ENCODE measurements at regions of chr5 and their contacts with region 1.

Region 1: DNA sequence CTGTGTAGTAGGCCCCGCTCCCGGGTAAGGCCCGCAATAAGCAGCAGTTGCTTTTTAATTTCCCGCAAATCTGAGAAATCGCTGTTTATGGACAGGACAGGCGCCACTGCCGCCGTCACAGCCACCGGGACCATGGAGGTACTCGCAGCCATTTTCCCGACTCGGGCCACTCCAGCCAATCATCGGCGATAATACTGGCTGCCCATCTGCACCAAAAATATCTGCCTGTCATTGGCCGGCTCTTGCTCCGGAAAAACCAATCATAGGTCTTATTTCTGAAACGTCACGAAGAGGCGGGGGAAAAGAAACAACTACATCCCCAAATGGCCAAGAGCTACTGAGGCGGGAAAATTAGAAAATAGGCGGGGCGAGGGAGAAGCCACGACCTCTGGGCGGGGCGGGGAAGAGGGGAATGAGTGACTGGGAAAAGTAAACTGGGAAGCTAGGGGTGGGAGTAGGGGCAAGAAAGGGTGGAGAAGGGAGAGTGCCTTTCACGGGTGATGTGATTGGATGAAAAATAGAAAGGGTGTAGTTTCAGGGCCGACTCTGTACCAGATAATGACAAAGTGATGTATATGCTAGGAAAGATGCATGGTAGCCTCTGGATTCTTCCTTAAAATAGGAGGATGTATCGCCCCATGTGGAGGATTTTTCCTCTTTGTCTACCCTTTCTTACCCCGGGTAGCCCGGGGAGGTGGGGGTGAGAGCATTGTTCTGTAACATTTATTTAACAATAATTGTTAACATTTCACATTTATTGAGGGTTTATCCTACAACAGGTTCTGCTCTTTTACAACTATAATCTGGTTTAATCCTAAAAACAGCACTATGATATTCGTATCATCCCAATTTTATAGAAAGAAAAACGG is at the start of gene CDC23:
- DNase-seq: peak; percentile 94
- ATAC-seq: peak; percentile 98
- H3K4me3 Mint-ChIP-seq: peak within 1 kb of the TSS; percentile 92
- H3K27ac Mint-ChIP-seq: peak within 1 kb of the TSS; percentile 94
- H3K4me1 Mint-ChIP-seq: peaks cover 16% of the 10 kb centered on the region
- H3K27me3 Mint-ChIP-seq: no peaks in the 10 kb centered on the region
- total RNA-seq, gene CDC23: 34.0 to 38.1 TPM

Region 2: DNA sequence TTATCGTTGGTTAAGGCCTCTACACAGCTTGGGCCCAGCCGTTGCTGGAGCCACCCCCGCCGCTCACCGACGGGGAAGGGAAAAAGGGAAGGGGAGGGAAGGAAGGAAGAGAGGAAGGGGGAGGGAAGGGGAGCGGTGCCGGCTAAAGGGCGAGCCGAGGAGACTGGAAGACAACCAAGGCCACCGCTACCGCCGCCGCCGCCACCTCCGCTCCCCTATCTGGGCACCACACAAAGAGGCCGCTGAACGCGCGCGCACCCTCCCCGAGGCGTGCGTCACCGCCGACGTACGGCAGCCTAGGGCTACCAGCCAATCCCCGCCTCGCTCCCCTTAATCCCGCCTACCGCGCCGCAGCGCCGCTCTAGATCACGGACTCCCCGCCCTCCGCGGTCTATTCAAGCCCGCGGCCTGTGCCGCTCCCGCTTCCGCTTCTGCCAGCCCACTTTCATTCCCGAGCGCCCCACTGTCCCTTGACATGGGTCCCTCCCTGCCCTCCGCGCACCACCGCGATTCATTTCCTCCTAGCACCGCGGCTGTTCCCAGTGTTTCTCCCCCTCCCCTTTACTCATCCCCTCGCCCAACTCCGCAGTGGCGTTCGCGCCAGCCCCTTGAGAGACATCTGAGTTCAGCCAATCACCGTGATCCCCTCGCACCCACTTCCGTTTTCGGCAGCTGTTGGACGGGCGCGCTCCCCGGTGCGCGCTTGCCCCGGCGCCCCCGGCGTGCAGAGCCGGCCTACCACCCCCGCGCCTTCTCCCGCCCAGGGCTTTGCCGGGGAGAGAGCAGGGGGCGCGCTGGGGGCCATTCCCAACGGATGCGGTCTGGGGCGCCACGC is 459.1 kb before region 1 on chr5 and contains the start of gene HNRNPA0:
- CTCF ChIA-PET with region 1: no interaction called
- POLR2A ChIA-PET with region 1: no interaction called
- intact Hi-C with region 1: loop called in 1 of 2 experiments (anchors 1 kb)
- DNase-seq: peak; percentile 98
- ATAC-seq: peak; percentile 87
- H3K4me3 Mint-ChIP-seq: peak within 1 kb of the TSS; percentile 77
- H3K27ac Mint-ChIP-seq: peak within 1 kb of the TSS; percentile 97
- H3K4me1 Mint-ChIP-seq: peaks cover 28% of the 10 kb centered on the region
- H3K27me3 Mint-ChIP-seq: no peaks in the 10 kb centered on the region
- total RNA-seq, gene HNRNPA0: 18.9 to 32.1 TPM

Region 3: GRCh38 chr5:138148811-138149210 is 64.6 kb before region 1 on chr5:
- CTCF ChIA-PET with region 1: no interaction called
- POLR2A ChIA-PET with region 1: no interaction called
- intact Hi-C with region 1: no loop called
- DNase-seq: no peak
- ATAC-seq: no peak
- H3K4me3 Mint-ChIP-seq: no peak overlapping the region
- H3K27ac Mint-ChIP-seq: no peak overlapping the region
- H3K4me1 Mint-ChIP-seq: no peaks in the 10 kb centered on the region
- H3K27me3 Mint-ChIP-seq: no peaks in the 10 kb centered on the region

Region 4: GRCh38 chr5:138160706-138161105 is 52.7 kb before region 1 on chr5:
- CTCF ChIA-PET with region 1: no interaction called
- POLR2A ChIA-PET with region 1: no interaction called
- intact Hi-C with region 1: no loop called
- DNase-seq: no peak
- ATAC-seq: no peak
- H3K4me3 Mint-ChIP-seq: no peak overlapping the region
- H3K27ac Mint-ChIP-seq: no peak overlapping the region
- H3K4me1 Mint-ChIP-seq: no peaks in the 10 kb centered on the region
- H3K27me3 Mint-ChIP-seq: no peaks in the 10 kb centered on the region

Region 5: GRCh38 chr5:138274189-138274853 is 60.9 kb after region 1 on chr5 and contains the start of gene GFRA3:
- CTCF ChIA-PET with region 1: no interaction called
- POLR2A ChIA-PET with region 1: interaction called, 10 read pairs
- intact Hi-C with region 1: no loop called
- DNase-seq: peak; percentile 32
- ATAC-seq: peak; percentile 45
- H3K4me3 Mint-ChIP-seq: peak within 1 kb of the TSS; percentile 52
- H3K27ac Mint-ChIP-seq: no peak within 1 kb of the TSS
- H3K4me1 Mint-ChIP-seq: peaks cover 5% of the 10 kb centered on the region
- H3K27me3 Mint-ChIP-seq: peaks cover 25% of the 10 kb centered on the region
- total RNA-seq, gene GFRA3: 0.09 TPM in 1 of 2 experiments, not detected in the other

Region 6: GRCh38 chr5:138337685-138338410 is 124.5 kb after region 1 on chr5 and contains the start of gene FAM53C:
- CTCF ChIA-PET with region 1: no interaction called
- POLR2A ChIA-PET with region 1: interaction called, 3 read pairs
- intact Hi-C with region 1: loop called (anchors 1 to 5 kb)
- DNase-seq: peak; percentile 95
- ATAC-seq: peak; percentile 88
- H3K4me3 Mint-ChIP-seq: peak within 1 kb of the TSS; percentile 84
- H3K27ac Mint-ChIP-seq: peak within 1 kb of the TSS; percentile 97
- H3K4me1 Mint-ChIP-seq: peaks cover 38% of the 10 kb centered on the region
- H3K27me3 Mint-ChIP-seq: no peaks in the 10 kb centered on the region
- total RNA-seq, gene FAM53C: 22.8 to 25.9 TPM

Region 7: GRCh38 chr5:138408023-138408422 is 194.6 kb after region 1 on chr5:
- CTCF ChIA-PET with region 1: interaction called, 3 read pairs
- POLR2A ChIA-PET with region 1: no interaction called
- intact Hi-C with region 1: loop called in 1 of 2 experiments (anchors 5 kb)
- DNase-seq: peak; percentile 68
- ATAC-seq: peak; percentile 94
- H3K4me3 Mint-ChIP-seq: no peak overlapping the region
- H3K27ac Mint-ChIP-seq: peak overlapping the region; percentile 60
- H3K4me1 Mint-ChIP-seq: peaks cover 13% of the 10 kb centered on the region
- H3K27me3 Mint-ChIP-seq: no peaks in the 10 kb centered on the region

Region 8: GRCh38 chr5:138491669-138492559 is 278.5 kb after region 1 on chr5:
- CTCF ChIA-PET with region 1: no interaction called
- POLR2A ChIA-PET with region 1: no interaction called
- intact Hi-C with region 1: loop called in 1 of 2 experiments (anchors 1 kb)
- DNase-seq: peak; percentile 92
- ATAC-seq: peak; percentile 99
- H3K4me3 Mint-ChIP-seq: peak overlapping the region; percentile 84
- H3K27ac Mint-ChIP-seq: peak overlapping the region; percentile 79
- H3K4me1 Mint-ChIP-seq: peaks cover 15% of the 10 kb centered on the region
- H3K27me3 Mint-ChIP-seq: peaks cover 23% of the 10 kb centered on the region

Region 9: DNA sequence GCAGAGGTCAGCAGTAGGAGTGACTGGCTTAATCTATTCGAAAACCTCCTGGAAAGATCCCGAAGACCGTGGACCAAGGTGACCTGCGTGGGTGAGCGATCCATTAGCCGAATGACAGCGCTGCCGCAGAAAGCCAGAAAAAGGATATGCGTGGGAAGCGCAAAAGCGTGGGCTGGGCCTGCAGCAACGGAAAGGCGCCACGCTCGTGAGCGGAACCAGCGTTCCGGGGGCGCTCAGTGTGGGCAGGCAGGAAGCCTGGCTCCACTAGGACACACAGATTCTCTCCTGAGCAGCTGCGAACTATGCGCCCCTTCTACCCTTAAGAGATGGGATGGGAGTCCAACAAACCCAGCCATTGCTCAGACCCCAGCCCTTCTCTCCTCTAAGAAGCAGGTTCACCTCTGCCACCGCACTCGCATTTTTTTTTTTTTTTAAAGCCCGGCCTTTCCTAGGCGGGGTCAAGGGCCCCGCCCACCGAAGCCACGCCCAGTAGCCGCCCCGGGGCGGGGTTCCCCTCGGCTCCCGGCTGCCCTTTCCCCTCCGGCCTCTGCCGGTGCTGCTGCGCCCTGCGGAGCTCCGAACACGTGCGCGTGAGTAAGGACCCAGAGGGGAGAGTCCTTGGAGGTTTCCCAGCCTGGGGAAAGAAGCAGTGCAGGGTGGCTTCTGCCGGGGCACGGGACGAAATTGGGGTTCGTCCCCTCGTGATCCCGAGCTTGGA is 1060.3 kb after region 1 on chr5:
- CTCF ChIA-PET with region 1: no interaction called
- POLR2A ChIA-PET with region 1: no interaction called
- intact Hi-C with region 1: loop called in 1 of 2 experiments (anchors 5 kb)
- DNase-seq: peak; percentile 95
- ATAC-seq: peak; percentile 90
- H3K4me3 Mint-ChIP-seq: peak overlapping the region; percentile 95
- H3K27ac Mint-ChIP-seq: peak overlapping the region; percentile 88
- H3K4me1 Mint-ChIP-seq: peaks cover 54% of the 10 kb centered on the region
- H3K27me3 Mint-ChIP-seq: no peaks in the 10 kb centered on the region